RWPE1 (cell line): ENCODE measurements at regions of chr17 and their contacts with region 1.

Region 1: DNA sequence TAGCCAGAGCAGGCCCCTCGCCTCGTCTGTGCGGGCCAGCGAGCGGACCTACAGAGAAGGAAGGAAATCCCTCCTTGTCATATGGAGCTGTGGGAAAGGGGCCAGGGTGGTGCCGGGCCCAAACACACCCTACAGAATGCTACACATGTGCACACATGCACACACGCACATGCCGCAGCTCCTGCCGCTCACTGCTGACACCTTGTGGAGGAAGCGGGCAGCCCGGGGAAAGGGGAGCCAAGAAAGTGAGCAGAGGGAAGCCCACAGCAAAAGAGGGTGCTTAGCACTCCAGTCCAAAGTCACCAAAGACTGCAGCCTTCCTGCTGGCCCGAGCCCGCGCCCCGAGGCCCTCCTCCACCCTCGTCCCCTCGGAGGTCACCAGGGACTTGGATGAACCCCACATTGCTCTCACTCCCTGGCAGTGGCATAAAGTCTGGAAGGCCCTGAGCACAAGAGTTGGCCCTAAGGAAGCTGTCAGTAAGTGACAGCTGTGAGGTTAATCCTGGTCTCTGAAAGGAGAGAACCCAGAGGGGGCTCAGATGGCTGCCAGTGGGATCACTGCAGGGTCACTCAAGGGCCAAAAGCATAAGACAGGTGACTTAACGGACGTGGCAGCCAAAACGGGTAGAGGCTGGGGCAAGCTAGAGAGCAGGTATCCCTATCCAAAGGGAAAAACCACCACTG is 68.2 kb downstream of the MYO18A start:
- DNase-seq: peak; percentile 55
- H3K27ac ChIP-seq: peak overlapping the region; percentile 42
- CTCF ChIP-seq: peak; percentile 96

Region 2: GRCh38 chr17:28967221-28968140 is 144.5 kb before region 1 on chr17:
- CTCF ChIA-PET with region 1: interaction called, 36 read pairs
- POLR2A ChIA-PET with region 1: interaction called, 4 read pairs
- DNase-seq: no peak
- H3K27ac ChIP-seq: no peak overlapping the region
- CTCF ChIP-seq: no peak

Region 3: DNA sequence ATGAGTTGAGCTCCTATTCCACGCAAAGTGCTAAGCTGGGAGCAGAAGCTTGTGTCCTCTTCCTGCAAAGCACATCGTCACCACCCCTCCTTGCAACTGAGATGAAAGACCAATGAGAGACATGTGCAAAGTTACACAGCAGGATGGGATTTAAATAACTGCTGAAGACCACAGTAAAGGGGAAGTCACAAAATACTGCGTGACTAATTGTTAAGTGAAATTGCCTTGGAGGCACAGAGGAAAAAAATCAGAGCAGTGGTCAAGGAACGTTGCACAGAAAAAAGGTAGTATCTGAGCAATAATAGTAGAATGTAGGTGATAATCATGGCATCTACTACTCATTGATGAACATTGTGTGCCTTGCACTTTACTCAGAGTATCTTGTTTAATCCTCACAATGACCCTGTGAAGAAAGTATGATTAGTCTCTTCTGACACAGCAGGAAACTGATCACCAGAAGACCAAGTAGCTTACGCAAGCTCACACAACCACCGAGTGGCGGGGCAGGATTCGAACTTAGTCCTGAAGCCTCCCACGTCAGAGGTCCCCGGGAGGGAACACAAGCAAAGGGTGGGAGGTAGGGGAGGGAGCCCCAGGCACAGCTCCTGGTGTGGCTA is 83.6 kb after region 1 on chr17:
- CTCF ChIA-PET with region 1: no interaction called
- POLR2A ChIA-PET with region 1: no interaction called
- DNase-seq: no peak
- H3K27ac ChIP-seq: no peak overlapping the region
- CTCF ChIP-seq: no peak

Region 4: GRCh38 chr17:29347831-29348629 is 236.1 kb after region 1 on chr17:
- CTCF ChIA-PET with region 1: no interaction called
- POLR2A ChIA-PET with region 1: no interaction called
- DNase-seq: no peak
- H3K27ac ChIP-seq: no peak overlapping the region
- CTCF ChIP-seq: no peak